ENCODE measurements at regions of chr12 and their contacts with region 1.

Region 1: DNA sequence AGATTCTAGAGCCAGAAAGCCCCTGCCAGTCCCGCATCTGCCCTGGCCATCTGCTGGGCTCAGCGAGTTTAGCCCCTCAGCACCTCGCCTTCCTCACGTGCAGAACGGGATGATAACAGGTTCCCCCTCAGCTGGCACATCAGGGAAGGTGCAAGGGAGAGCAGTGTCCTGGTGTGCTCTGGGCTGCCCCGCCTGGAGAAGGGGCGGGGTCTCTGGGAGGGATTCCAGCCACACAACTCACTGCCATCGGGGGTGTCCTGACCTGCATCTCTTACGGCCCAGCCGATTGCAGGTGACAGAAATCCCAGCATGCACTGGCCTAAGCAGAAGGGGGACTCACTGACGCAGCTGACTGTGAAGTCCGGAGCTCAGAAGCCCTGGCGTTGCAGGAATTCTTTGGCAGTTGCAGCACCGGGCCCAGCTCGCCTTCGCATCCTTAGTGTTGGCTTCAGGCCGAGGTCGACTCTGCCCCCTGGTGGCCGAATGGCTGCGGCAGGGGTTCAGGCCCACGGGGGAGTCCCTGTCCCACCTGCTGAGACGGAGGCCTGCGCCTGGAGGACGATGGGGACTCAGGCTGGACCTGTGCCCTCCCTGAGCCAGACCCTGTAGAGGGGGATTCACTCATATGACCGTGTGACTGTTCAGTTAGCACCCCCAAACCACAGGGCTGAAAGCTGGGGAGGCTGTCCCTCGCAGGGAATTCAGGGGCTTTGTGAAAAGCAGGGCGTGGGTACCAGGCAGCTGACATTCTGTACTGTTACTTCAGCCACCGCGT is 178.6 kb downstream of the ADGRD1 start:
- DNase-seq: peak; percentile 94
- ATAC-seq: peak; percentile 88
- H3K4me3 Mint-ChIP-seq: peak overlapping the region; percentile 38; the same call in 1 of the 2 replicates
- H3K27ac Mint-ChIP-seq: no peak overlapping the region
- H3K4me1 Mint-ChIP-seq: no peaks in the 10 kb centered on the region
- H3K27me3 Mint-ChIP-seq: no peaks in the 10 kb centered on the region
- CTCF ChIP-seq: peak; percentile 88

Region 2: GRCh38 chr12:130916251-130916911 is 215.9 kb before region 1 on chr12:
- CTCF ChIA-PET with region 1: interaction called, 37 read pairs
- POLR2A ChIA-PET with region 1: no interaction called
- DNase-seq: peak; percentile 69
- ATAC-seq: peak; percentile 87
- H3K4me3 Mint-ChIP-seq: peak overlapping the region; percentile 13; the same call in 1 of the 2 replicates
- H3K27ac Mint-ChIP-seq: no peak overlapping the region
- H3K4me1 Mint-ChIP-seq: peaks cover 8% of the 10 kb centered on the region
- H3K27me3 Mint-ChIP-seq: peaks cover 9% of the 10 kb centered on the region
- CTCF ChIP-seq: peak; percentile 92

Region 3: GRCh38 chr12:130945786-130946492 is 186.4 kb before region 1 on chr12:
- CTCF ChIA-PET with region 1: no interaction called
- POLR2A ChIA-PET with region 1: no interaction called
- DNase-seq: no peak
- ATAC-seq: no peak
- H3K4me3 Mint-ChIP-seq: no peak overlapping the region
- H3K27ac Mint-ChIP-seq: no peak overlapping the region
- H3K4me1 Mint-ChIP-seq: peaks cover 33% of the 10 kb centered on the region
- H3K27me3 Mint-ChIP-seq: peaks cover 22% of the 10 kb centered on the region
- CTCF ChIP-seq: no peak

Region 4: GRCh38 chr12:131116391-131117117 is 15.8 kb before region 1 on chr12:
- CTCF ChIA-PET with region 1: interaction called, 79 read pairs
- POLR2A ChIA-PET with region 1: no interaction called
- DNase-seq: peak; percentile 64
- ATAC-seq: peak; percentile 85
- H3K4me3 Mint-ChIP-seq: no peak overlapping the region
- H3K27ac Mint-ChIP-seq: no peak overlapping the region
- H3K4me1 Mint-ChIP-seq: peaks cover 13% of the 10 kb centered on the region
- H3K27me3 Mint-ChIP-seq: 0 out of 2 replicates have a peak, but pooled peaks cover 4% of the 10 kb centered on the region
- CTCF ChIP-seq: no peak

Region 5: GRCh38 chr12:131142891-131143657 is 10.8 kb after region 1 on chr12:
- CTCF ChIA-PET with region 1: interaction called, 19 read pairs
- POLR2A ChIA-PET with region 1: no interaction called
- DNase-seq: no peak
- ATAC-seq: no peak
- H3K4me3 Mint-ChIP-seq: no peak overlapping the region
- H3K27ac Mint-ChIP-seq: no peak overlapping the region; the same call in 1 of the 2 replicates
- H3K4me1 Mint-ChIP-seq: peaks cover 4% of the 10 kb centered on the region; the same call in 1 of the 2 replicates
- H3K27me3 Mint-ChIP-seq: no peaks in the 10 kb centered on the region
- CTCF ChIP-seq: no peak

Region 6: GRCh38 chr12:131159660-131160059 is 27.4 kb after region 1 on chr12:
- CTCF ChIA-PET with region 1: interaction called, 16 read pairs
- POLR2A ChIA-PET with region 1: no interaction called
- DNase-seq: no peak
- ATAC-seq: peak; percentile 94
- H3K4me3 Mint-ChIP-seq: no peak overlapping the region
- H3K27ac Mint-ChIP-seq: no peak overlapping the region
- H3K4me1 Mint-ChIP-seq: 0 out of 2 replicates have a peak, but pooled peaks cover 3% of the 10 kb centered on the region
- H3K27me3 Mint-ChIP-seq: no peaks in the 10 kb centered on the region
- CTCF ChIP-seq: 0 out of 2 replicates have a peak, but pooled peaks have one; percentile 24

Region 7: GRCh38 chr12:131229426-131230339 is 97.4 kb after region 1 on chr12:
- CTCF ChIA-PET with region 1: interaction called, 22 read pairs
- POLR2A ChIA-PET with region 1: no interaction called
- DNase-seq: peak; percentile 60
- ATAC-seq: peak; percentile 79
- H3K4me3 Mint-ChIP-seq: peak overlapping the region; percentile 36
- H3K27ac Mint-ChIP-seq: peak overlapping the region; percentile 95
- H3K4me1 Mint-ChIP-seq: peaks cover 34% of the 10 kb centered on the region
- H3K27me3 Mint-ChIP-seq: no peaks in the 10 kb centered on the region; the same call in 1 of the 2 replicates
- CTCF ChIP-seq: no peak

Measured in WTC11 (cell line).